Activated naive CD8-positive, alpha-beta T cell treated with anti-CD3 and anti-CD28 coated beads, Interleukin-2, amount 10 ng/mL, durations not matched to agents 7 days and 5 days (primary cell): ENCODE measurements at regions of chr6 and their contacts with region 1.

Region 1: GRCh38 chr6:170291271-170292110 is 613 bp upstream of the DLL1 start:
- DNase-seq: peak; percentile 69
- ATAC-seq: peak; percentile 46
- H3K4me3 Mint-ChIP-seq: peak overlapping the region; percentile 90
- H3K27ac Mint-ChIP-seq: peak overlapping the region; percentile 84
- H3K4me1 Mint-ChIP-seq: peaks cover 33% of the 10 kb centered on the region
- H3K27me3 Mint-ChIP-seq: peaks cover 41% of the 10 kb centered on the region

Region 2: GRCh38 chr6:170087941-170088581 is 203.4 kb before region 1 on chr6:
- POLR2A ChIA-PET with region 1: interaction called, 35 read pairs
- DNase-seq: peak; percentile 82
- ATAC-seq: peak; percentile 78
- H3K4me3 Mint-ChIP-seq: peak overlapping the region; percentile 94
- H3K27ac Mint-ChIP-seq: peak overlapping the region; percentile 98
- H3K4me1 Mint-ChIP-seq: peaks cover 33% of the 10 kb centered on the region
- H3K27me3 Mint-ChIP-seq: no peaks in the 10 kb centered on the region

Region 3: DNA sequence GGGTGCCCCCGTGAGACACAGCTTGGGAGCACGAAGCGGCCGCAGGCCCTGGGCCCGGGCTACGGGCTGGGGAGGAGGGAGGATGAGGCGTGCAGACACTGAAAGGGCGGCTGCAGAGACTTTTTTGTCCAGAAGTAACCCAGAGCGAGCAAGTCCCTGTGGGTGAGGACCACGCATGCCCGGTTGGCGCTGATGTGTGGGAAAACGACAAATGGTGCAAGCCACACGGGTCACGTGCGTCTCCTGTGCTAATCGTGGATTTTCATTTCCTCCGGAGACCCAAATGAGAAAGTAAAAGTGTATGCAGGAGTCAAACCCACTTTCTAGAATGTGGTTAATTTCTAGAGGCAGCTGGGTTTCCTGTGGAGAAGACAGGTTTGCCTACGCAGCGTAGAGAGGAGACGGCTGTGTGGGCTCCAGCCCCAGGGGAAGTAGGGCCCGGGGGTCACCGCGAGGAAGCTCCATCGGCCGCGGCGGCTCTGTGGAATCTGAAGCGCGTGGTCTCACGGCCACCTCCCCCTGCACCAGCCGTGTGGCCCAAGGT is 19.6 kb before region 1 on chr6:
- POLR2A ChIA-PET with region 1: interaction called, 28 read pairs
- DNase-seq: peak; percentile 82
- ATAC-seq: peak; percentile 94
- H3K4me3 Mint-ChIP-seq: peak overlapping the region; percentile 73
- H3K27ac Mint-ChIP-seq: peak overlapping the region; percentile 90
- H3K4me1 Mint-ChIP-seq: peaks cover 15% of the 10 kb centered on the region
- H3K27me3 Mint-ChIP-seq: peaks cover 19% of the 10 kb centered on the region